CD8-positive, alpha-beta T cell (primary cell): ENCODE measurements at regions of chr4 and their contacts with region 1.

Region 1: GRCh38 chr4:48141048-48141447 is 7.0 kb upstream of the TXK start:
- DNase-seq: peak in 2 of 9 experiments; percentile 63 to 74
- ATAC-seq: peak; percentile 27
- H3K4me3 ChIP-seq: no peak overlapping the region
- H3K4me3 Mint-ChIP-seq: no peak overlapping the region
- H3K27ac ChIP-seq: no peak overlapping the region
- H3K27ac Mint-ChIP-seq: no peak overlapping the region
- H3K4me1 ChIP-seq: peaks cover 47% of the 10 kb centered on the region
- H3K4me1 Mint-ChIP-seq: peaks cover 51% of the 10 kb centered on the region
- H3K27me3 ChIP-seq: no peaks in the 10 kb centered on the region
- H3K27me3 Mint-ChIP-seq: no peaks in the 10 kb centered on the region
- CTCF ChIP-seq: peak; percentile 72

Region 2: GRCh38 chr4:47914220-47914925 is 226.7 kb before region 1 on chr4 and contains the start of gene NFXL1:
- CTCF ChIA-PET with region 1: no interaction called
- POLR2A ChIA-PET with region 1: no interaction called
- intact Hi-C with region 1: loop called (anchors 1 to 10 kb)
- DNase-seq: peak; percentile 90 to 97 (median 96)
- ATAC-seq: peak; percentile 95
- H3K4me3 ChIP-seq: peak within 1 kb of the TSS; percentile 99 to 100
- H3K4me3 Mint-ChIP-seq: peak within 1 kb of the TSS; percentile 99
- H3K27ac ChIP-seq: peak within 1 kb of the TSS; percentile 81 to 86
- H3K27ac Mint-ChIP-seq: peak within 1 kb of the TSS; percentile 97
- H3K4me1 ChIP-seq: peaks cover 22% of the 10 kb centered on the region
- H3K4me1 Mint-ChIP-seq: peaks cover 32% of the 10 kb centered on the region
- H3K27me3 ChIP-seq: no peaks in the 10 kb centered on the region
- H3K27me3 Mint-ChIP-seq: no peaks in the 10 kb centered on the region
- CTCF ChIP-seq: no peak
- total RNA-seq, gene NFXL1: 6.5 to 8.1 TPM

Region 3: GRCh38 chr4:47933840-47934239 is 207.2 kb before region 1 on chr4:
- CTCF ChIA-PET with region 1: interaction called, 4 read pairs
- POLR2A ChIA-PET with region 1: no interaction called
- intact Hi-C with region 1: loop called (anchors 5 kb)
- DNase-seq: peak in 2 of 9 experiments; percentile 60 to 72
- ATAC-seq: peak; percentile 74
- H3K4me3 ChIP-seq: no peak overlapping the region
- H3K4me3 Mint-ChIP-seq: no peak overlapping the region
- H3K27ac ChIP-seq: no peak overlapping the region
- H3K27ac Mint-ChIP-seq: no peak overlapping the region
- H3K4me1 ChIP-seq: no peaks in the 10 kb centered on the region
- H3K4me1 Mint-ChIP-seq: no peaks in the 10 kb centered on the region
- H3K27me3 ChIP-seq: no peaks in the 10 kb centered on the region
- H3K27me3 Mint-ChIP-seq: peaks cover 6% of the 10 kb centered on the region
- CTCF ChIP-seq: peak; percentile 87

Region 4: DNA sequence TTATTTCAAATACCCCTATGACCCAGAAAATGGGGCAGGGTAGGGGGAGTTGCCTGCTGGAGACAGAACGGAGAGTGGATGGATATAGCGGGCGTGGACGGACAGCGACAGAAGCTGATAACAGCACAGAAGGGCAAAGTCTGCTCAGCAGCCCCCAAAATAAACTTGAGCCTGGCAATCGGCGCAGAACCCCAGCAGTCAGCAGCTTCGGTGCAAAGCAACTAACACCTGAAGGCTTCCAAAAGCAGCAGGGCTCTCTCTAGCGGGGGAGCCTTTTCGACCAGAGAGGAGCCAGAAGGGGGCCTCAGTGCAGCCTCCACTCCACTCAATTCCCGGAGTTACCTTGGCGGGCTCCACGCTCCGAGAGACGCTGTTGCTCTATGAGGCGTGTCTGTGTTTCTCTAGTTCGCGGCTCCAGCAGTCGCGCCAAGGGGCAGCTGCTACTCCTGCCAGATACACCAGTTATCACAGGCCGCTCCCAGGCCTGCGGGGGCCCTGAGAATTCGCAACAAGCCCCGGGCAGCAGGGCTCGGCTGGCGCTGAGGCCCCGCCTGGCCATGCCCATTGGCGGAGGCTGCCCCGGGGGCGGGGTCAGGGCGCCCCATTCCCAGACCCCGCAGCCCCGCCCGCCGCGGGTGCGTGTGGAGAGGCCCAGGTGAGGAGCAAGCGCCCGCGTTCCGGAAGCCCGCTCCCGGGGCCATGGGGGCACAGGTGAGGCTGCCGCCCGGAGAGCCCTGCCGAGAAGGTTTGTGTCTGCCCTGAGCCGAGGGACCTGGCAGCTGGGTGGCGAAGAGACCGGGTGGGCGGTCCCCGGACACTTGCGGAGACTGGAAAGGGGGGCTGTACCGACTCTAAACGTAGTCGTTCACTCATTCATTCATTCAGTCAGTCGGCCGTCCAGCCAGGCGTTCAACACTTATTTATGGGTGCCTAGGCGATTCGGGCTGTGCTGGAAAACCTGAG is 124.6 kb before region 1 on chr4 and contains the starts of genes CNGA1 and NIPAL1:
- CTCF ChIA-PET with region 1: interaction called, 3 read pairs
- POLR2A ChIA-PET with region 1: interaction called, 7 read pairs
- intact Hi-C with region 1: loop called in 1 of 2 experiments (anchors 5 kb)
- DNase-seq: peak; percentile 23 to 81 (median 69)
- ATAC-seq: peak; percentile 95
- H3K4me3 ChIP-seq: peak within 1 kb of the TSS; percentile 63 to 68
- H3K4me3 Mint-ChIP-seq: peak within 1 kb of the TSS; percentile 87
- H3K27ac ChIP-seq: no peak within 1 kb of the TSS
- H3K27ac Mint-ChIP-seq: peak within 1 kb of the TSS; percentile 3
- H3K4me1 ChIP-seq: peaks cover 12% of the 10 kb centered on the region
- H3K4me1 Mint-ChIP-seq: peaks cover 9% of the 10 kb centered on the region
- H3K27me3 ChIP-seq: no peaks in the 10 kb centered on the region
- H3K27me3 Mint-ChIP-seq: peaks cover 9% of the 10 kb centered on the region
- CTCF ChIP-seq: no peak
- total RNA-seq, gene CNGA1: not detected
- total RNA-seq, gene NIPAL1: 0.64 to 1.3 TPM

Region 5: DNA sequence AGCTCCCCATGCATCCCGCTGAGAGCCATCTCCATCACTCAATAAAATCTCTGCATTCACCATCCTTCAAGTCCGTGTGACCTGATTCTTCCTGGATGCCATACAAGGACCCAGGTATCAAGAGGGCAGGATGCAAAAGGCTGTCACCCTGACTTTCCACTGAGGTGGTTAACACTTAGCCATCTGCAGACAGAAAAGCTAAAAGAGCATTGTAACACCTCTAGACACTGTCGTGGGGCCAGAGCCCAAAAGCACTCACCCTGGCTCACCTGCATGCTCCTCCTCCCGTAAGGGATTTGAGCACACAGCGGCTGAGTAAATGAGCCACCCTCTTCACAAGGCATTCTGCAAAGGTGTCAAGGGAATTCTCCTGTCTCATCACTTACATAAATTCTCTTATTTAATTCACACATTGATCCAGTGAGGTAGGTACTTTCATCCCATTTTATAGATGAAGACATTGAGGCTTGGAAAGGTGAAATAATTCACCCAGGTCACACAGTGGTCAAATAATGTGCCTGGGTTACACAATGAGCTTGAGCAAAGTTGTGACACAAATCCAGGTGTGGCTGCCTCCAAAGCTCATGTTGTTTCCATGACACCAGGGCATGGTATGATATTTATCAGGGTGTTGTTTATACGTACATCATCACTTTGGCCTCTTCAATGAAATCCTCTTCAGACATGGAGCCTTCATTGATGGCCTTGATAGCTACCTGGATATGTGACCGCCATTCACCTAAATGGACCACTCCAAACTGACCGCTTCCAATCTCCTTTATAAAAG is 55.0 kb before region 1 on chr4:
- CTCF ChIA-PET with region 1: interaction called, 3 read pairs
- POLR2A ChIA-PET with region 1: no interaction called
- intact Hi-C with region 1: loop called in 1 of 2 experiments (anchors 2 kb)
- DNase-seq: peak in 1 of 9 experiments; percentile 10
- ATAC-seq: no peak
- H3K4me3 ChIP-seq: no peak overlapping the region
- H3K4me3 Mint-ChIP-seq: no peak overlapping the region
- H3K27ac ChIP-seq: no peak overlapping the region
- H3K27ac Mint-ChIP-seq: peak overlapping the region; percentile 10
- H3K4me1 ChIP-seq: no peaks in the 10 kb centered on the region
- H3K4me1 Mint-ChIP-seq: peaks cover 14% of the 10 kb centered on the region
- H3K27me3 ChIP-seq: no peaks in the 10 kb centered on the region
- H3K27me3 Mint-ChIP-seq: no peaks in the 10 kb centered on the region
- CTCF ChIP-seq: no peak

Region 6: GRCh38 chr4:48122756-48123155 is 18.3 kb before region 1 on chr4:
- CTCF ChIA-PET with region 1: interaction called, 174 read pairs
- POLR2A ChIA-PET with region 1: interaction called, 77 read pairs
- intact Hi-C with region 1: loop called in 1 of 2 experiments (anchors 1 kb)
- DNase-seq: no peak
- ATAC-seq: no peak
- H3K4me3 ChIP-seq: no peak overlapping the region
- H3K4me3 Mint-ChIP-seq: no peak overlapping the region
- H3K27ac ChIP-seq: no peak overlapping the region
- H3K27ac Mint-ChIP-seq: no peak overlapping the region
- H3K4me1 ChIP-seq: peaks cover 96% of the 10 kb centered on the region
- H3K4me1 Mint-ChIP-seq: peaks cover 69% of the 10 kb centered on the region
- H3K27me3 ChIP-seq: no peaks in the 10 kb centered on the region
- H3K27me3 Mint-ChIP-seq: no peaks in the 10 kb centered on the region
- CTCF ChIP-seq: no peak

Region 7: DNA sequence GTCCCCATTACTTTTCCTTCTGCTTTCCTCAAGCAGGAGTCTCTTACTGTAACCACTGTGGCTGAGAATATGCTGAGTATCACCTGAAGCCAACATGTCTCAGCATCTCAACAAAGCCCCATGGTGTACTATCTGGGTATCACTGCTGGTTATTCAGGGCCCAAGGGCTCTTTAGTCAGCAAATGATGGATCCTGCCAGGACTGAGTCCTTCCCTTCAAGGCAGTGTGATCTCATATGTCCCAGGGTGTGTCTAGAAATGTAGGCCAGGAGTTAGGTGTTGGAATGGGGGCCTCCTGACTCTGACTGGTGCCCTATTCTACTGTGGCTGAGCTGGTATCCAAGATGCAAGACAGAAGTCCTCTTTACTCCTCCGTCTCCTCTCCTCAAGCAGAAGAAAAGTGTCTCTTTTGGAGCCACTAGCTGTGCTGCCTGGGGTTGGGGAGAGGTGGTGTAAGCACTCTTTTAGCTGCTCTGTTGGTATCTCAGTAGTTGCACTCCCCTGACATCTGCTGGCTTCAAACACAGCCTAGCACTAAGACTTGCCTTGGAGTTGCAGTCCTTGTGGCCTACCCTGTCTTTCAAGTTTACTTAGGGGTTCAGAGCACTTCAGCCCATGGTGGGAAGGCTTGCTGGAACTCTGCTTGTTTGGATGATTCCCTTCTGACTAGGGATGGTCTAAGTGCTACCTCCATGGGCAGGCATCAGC is 736.9 kb after region 1 on chr4:
- CTCF ChIA-PET with region 1: no interaction called
- POLR2A ChIA-PET with region 1: no interaction called
- intact Hi-C with region 1: no loop called
- DNase-seq: no peak
- ATAC-seq: no peak
- H3K4me3 ChIP-seq: no peak overlapping the region
- H3K4me3 Mint-ChIP-seq: no peak overlapping the region
- H3K27ac ChIP-seq: no peak overlapping the region
- H3K27ac Mint-ChIP-seq: no peak overlapping the region
- H3K4me1 ChIP-seq: no peaks in the 10 kb centered on the region
- H3K4me1 Mint-ChIP-seq: no peaks in the 10 kb centered on the region
- H3K27me3 ChIP-seq: no peaks in the 10 kb centered on the region
- H3K27me3 Mint-ChIP-seq: no peaks in the 10 kb centered on the region
- CTCF ChIP-seq: no peak